ENCODE measurements at regions of chr1 and their contacts with region 1.

Region 1: DNA sequence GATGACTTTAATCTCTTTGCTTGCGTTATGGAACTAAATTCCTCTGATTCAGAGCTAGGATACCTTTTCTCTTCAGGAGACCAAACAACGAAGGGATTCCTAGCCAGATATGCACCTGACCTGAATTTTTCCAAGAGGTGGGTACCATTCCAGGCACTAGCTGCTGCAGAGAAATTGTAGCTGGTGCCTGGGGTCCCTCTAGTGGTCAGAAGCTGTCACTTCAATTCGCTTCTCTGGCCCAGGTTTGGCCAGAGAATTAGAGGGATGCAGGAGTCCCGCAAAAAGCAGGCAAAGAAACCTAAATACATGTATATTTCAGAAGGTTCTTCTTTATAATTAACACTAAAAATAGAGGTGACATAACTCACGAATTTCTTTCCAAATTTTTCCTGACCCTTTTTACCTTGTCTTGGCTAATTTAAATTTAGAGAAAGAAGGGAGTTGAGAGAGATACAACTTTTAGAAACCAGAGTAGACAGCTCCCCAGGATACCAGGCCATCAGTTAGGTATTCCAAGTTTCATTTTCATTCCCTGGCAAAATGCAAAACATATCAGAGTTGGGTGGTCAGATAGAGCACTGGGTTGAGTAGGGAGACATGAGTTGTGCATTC is 9.6 kb downstream of the ACKR1 start:
- DNase-seq: peak; percentile 60
- H3K4me3 Mint-ChIP-seq: no peak overlapping the region
- H3K27ac Mint-ChIP-seq: no peak overlapping the region
- H3K4me1 Mint-ChIP-seq: peaks cover 8% of the 10 kb centered on the region
- H3K27me3 Mint-ChIP-seq: peaks cover 85% of the 10 kb centered on the region
- CTCF ChIP-seq: peak; percentile 90

Region 2: DNA sequence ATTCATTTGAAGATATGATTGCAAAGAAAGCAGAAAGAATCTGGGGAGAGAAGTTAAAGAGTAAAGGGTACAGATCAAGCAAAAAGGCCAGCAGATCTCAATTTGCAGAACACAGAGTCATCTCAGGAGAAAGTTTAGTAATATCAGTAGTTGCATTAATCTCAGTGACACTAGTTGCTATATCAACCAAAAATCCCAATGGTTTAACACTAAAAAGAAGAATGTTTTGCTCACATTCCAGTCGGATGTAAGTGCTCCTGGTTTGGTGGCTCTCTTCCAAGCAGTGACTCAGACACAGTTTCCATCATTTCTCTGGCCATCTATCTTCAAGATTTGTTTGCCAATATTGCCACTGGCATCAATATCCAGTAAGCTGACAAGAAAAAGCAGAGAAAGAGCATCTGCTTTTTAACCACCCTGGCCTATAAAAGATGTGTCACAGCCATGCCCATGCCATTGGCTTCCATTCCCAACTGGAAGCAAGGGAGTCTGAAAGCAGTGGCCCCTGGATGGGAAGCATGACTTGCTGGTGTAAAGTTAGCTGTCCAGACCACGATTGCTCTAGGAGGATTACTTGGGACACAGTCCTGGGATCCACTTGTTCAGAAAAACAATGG is 92.1 kb before region 1 on chr1:
- CTCF ChIA-PET with region 1: no interaction called
- intact Hi-C with region 1: no loop called
- DNase-seq: no peak
- H3K4me3 Mint-ChIP-seq: no peak overlapping the region
- H3K27ac Mint-ChIP-seq: no peak overlapping the region
- H3K4me1 Mint-ChIP-seq: no peaks in the 10 kb centered on the region
- H3K27me3 Mint-ChIP-seq: peaks cover 68% of the 10 kb centered on the region
- CTCF ChIP-seq: no peak

Region 3: GRCh38 chr1:159132271-159132881 is 81.9 kb before region 1 on chr1:
- CTCF ChIA-PET with region 1: interaction called, 7 read pairs
- intact Hi-C with region 1: loop called (anchors 1 kb)
- DNase-seq: peak; percentile 85
- H3K4me3 Mint-ChIP-seq: no peak overlapping the region
- H3K27ac Mint-ChIP-seq: no peak overlapping the region
- H3K4me1 Mint-ChIP-seq: no peaks in the 10 kb centered on the region
- H3K27me3 Mint-ChIP-seq: no peaks in the 10 kb centered on the region
- CTCF ChIP-seq: peak; percentile 89

Region 4: GRCh38 chr1:159161001-159161718 is 53.1 kb before region 1 on chr1:
- CTCF ChIA-PET with region 1: interaction called, 6 read pairs
- intact Hi-C with region 1: loop called (anchors 1 kb)
- DNase-seq: peak; percentile 86
- H3K4me3 Mint-ChIP-seq: no peak overlapping the region
- H3K27ac Mint-ChIP-seq: no peak overlapping the region
- H3K4me1 Mint-ChIP-seq: no peaks in the 10 kb centered on the region
- H3K27me3 Mint-ChIP-seq: peaks cover 53% of the 10 kb centered on the region
- CTCF ChIP-seq: peak; percentile 98

Region 5: GRCh38 chr1:159261721-159262487 is 47.6 kb after region 1 on chr1:
- CTCF ChIA-PET with region 1: no interaction called
- intact Hi-C with region 1: no loop called
- DNase-seq: no peak
- H3K4me3 Mint-ChIP-seq: no peak overlapping the region
- H3K27ac Mint-ChIP-seq: no peak overlapping the region
- H3K4me1 Mint-ChIP-seq: no peaks in the 10 kb centered on the region
- H3K27me3 Mint-ChIP-seq: no peaks in the 10 kb centered on the region
- CTCF ChIP-seq: no peak

Region 6: GRCh38 chr1:159279754-159280153 is 65.5 kb after region 1 on chr1:
- CTCF ChIA-PET with region 1: no interaction called
- intact Hi-C with region 1: loop called (anchors 10 kb)
- DNase-seq: no peak
- H3K4me3 Mint-ChIP-seq: no peak overlapping the region
- H3K27ac Mint-ChIP-seq: no peak overlapping the region
- H3K4me1 Mint-ChIP-seq: no peaks in the 10 kb centered on the region
- H3K27me3 Mint-ChIP-seq: peaks cover 12% of the 10 kb centered on the region
- CTCF ChIP-seq: no peak

Region 7: DNA sequence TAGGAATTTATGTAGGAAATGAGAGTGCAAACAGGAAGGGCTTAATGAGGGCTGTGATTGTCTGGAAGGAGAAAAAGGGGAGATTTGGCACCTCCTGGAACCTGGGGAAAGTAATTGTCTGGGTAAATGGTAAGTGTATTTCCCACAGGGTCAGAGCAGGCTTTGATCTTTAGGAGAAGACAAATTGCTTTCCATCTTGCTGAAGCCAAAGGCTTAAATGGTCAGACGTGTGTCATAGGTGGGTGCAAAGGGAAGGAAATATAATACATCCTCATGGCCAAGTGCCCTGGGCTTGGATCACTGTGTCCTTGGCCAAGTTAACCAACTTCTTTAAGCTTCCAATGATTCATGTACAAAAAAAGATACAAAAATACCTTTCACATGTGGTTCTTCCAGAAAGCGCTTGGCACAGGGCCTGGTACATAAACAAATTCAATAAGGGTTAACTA is 565.2 kb after region 1 on chr1:
- CTCF ChIA-PET with region 1: no interaction called
- intact Hi-C with region 1: loop called (anchors 2 kb)
- DNase-seq: no peak
- H3K4me3 Mint-ChIP-seq: no peak overlapping the region
- H3K27ac Mint-ChIP-seq: peak overlapping the region; percentile 12
- H3K4me1 Mint-ChIP-seq: peaks cover 6% of the 10 kb centered on the region
- H3K27me3 Mint-ChIP-seq: peaks cover 21% of the 10 kb centered on the region
- CTCF ChIP-seq: no peak

Region 8: GRCh38 chr1:159790237-159790917 is 576.1 kb after region 1 on chr1:
- CTCF ChIA-PET with region 1: interaction called, 4 read pairs
- intact Hi-C with region 1: loop called (anchors 2 kb)
- DNase-seq: peak; percentile 43
- H3K4me3 Mint-ChIP-seq: no peak overlapping the region
- H3K27ac Mint-ChIP-seq: no peak overlapping the region
- H3K4me1 Mint-ChIP-seq: peaks cover 13% of the 10 kb centered on the region
- H3K27me3 Mint-ChIP-seq: peaks cover 14% of the 10 kb centered on the region
- CTCF ChIP-seq: peak; percentile 57

Measured in Calu3 (cell line).